Calu3 (cell line): ENCODE measurements at regions of chr6 and their contacts with region 1.

Region 1: DNA sequence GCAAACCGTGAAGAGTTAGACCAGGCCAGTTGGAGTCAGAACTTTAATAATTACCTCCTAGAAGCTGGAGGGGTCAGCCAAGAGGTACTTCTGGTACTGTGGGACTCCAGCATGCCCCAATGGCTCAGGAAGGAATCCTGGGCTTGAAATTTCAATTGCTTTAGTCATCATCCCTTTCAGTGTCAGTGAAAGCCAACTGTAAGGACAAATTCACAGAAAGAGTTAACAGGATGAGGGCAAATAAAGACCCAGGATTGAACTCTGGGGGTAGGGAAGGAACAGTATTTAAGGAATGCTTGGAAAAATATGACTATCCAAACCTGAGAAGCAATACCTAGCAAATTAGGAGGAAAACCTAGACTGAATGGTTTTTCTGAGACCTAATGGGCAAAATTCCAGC is 735.1 kb upstream of the MARCKS start:
- DNase-seq: peak; percentile 44
- H3K4me3 Mint-ChIP-seq: no peak overlapping the region
- H3K27ac Mint-ChIP-seq: peak overlapping the region; percentile 10
- H3K4me1 Mint-ChIP-seq: peaks cover 30% of the 10 kb centered on the region
- H3K27me3 Mint-ChIP-seq: no peaks in the 10 kb centered on the region
- CTCF ChIP-seq: no peak

Region 2: DNA sequence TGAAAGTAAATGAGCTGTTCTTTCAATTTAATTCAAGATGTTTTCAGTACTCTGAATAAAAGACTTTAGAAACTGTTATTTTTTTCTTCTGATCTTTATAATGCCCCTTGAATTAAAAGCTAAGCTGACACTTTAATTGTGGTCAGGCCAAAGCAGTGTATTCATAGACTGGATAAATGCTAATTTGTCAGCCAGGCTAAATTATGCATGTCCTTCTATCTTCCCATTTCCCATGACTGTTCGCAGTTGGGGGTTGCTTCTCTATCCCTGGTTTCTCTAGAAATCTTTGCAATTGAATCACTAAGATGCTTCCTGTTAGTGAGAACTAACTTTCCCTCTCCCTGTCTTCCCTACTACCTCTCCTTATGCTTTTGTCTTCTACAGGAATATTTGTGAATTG is 378.7 kb before region 1 on chr6:
- CTCF ChIA-PET with region 1: no interaction called
- intact Hi-C with region 1: no loop called
- DNase-seq: no peak
- H3K4me3 Mint-ChIP-seq: no peak overlapping the region
- H3K27ac Mint-ChIP-seq: no peak overlapping the region
- H3K4me1 Mint-ChIP-seq: no peaks in the 10 kb centered on the region
- H3K27me3 Mint-ChIP-seq: no peaks in the 10 kb centered on the region
- CTCF ChIP-seq: no peak

Region 3: DNA sequence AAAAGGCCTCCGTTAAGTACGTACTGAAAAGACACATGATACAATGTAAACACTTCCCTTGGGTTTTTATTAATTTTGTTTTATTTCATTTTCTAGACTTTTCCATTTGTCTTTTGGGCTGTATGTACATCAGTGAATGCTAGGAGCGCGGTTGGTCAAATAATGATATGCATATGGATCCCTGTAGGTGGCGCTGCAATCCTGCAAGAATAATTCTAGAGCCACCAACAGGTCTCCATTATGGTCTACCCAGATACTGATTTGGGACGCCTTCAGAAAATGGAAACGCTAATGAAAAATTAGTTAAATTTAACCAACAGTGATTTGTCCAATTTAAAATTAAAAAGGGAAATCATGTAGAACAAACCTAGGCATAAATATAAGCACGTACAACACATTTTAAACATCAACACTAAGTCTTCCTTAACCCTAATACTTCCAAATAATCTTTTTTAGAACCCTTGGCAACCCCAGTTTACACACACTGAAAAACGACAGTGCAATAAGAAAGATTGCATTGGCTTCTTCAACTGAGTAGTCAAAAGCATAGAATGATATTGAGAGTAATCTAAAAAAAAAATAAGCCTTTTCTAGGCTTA is 341.5 kb before region 1 on chr6:
- CTCF ChIA-PET with region 1: no interaction called
- intact Hi-C with region 1: loop called (anchors 10 kb)
- DNase-seq: peak; percentile 76
- H3K4me3 Mint-ChIP-seq: no peak overlapping the region
- H3K27ac Mint-ChIP-seq: no peak overlapping the region
- H3K4me1 Mint-ChIP-seq: no peaks in the 10 kb centered on the region
- H3K27me3 Mint-ChIP-seq: no peaks in the 10 kb centered on the region
- CTCF ChIP-seq: peak; percentile 73

Region 4: GRCh38 chr6:113359155-113360140 is 237.4 kb after region 1 on chr6:
- CTCF ChIA-PET with region 1: no interaction called
- intact Hi-C with region 1: loop called (anchors 5 kb)
- DNase-seq: peak; percentile 40
- H3K4me3 Mint-ChIP-seq: no peak overlapping the region
- H3K27ac Mint-ChIP-seq: peak overlapping the region; percentile 69
- H3K4me1 Mint-ChIP-seq: peaks cover 65% of the 10 kb centered on the region
- H3K27me3 Mint-ChIP-seq: no peaks in the 10 kb centered on the region
- CTCF ChIP-seq: no peak

Region 5: DNA sequence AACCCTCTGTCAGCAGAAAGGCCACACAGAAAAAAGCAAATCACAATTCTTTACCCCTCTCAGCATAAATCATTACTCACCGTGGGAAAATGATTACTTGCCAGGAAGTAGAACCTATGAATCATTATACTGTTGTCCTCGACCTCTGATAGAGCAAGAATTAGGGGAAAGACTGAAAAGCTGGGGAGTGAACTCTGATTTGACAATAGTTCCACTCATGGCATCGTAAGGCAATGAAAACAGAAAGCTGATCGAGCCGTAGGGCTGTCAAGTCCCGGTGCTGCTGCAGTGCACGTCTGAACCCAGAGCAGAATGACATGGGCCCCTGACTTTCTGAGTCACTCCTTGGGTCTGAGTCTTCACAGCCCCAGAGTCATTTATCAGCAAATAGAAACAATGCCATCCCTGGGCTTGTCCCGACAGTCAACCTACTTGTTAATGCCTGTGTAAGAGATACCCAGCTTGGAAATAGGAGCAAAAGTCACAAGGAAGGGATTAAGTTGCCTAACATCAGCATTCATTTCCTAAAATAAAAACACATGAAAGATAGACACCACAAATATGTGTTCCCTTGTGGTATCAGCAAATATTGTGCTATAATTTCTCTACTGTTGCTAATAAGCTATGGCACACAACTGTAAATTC is 510.3 kb after region 1 on chr6:
- CTCF ChIA-PET with region 1: no interaction called
- intact Hi-C with region 1: loop called (anchors 5 kb)
- DNase-seq: peak; percentile 61
- H3K4me3 Mint-ChIP-seq: peak overlapping the region; percentile 55
- H3K27ac Mint-ChIP-seq: peak overlapping the region; percentile 97
- H3K4me1 Mint-ChIP-seq: peaks cover 57% of the 10 kb centered on the region
- H3K27me3 Mint-ChIP-seq: no peaks in the 10 kb centered on the region
- CTCF ChIP-seq: no peak

Region 6: DNA sequence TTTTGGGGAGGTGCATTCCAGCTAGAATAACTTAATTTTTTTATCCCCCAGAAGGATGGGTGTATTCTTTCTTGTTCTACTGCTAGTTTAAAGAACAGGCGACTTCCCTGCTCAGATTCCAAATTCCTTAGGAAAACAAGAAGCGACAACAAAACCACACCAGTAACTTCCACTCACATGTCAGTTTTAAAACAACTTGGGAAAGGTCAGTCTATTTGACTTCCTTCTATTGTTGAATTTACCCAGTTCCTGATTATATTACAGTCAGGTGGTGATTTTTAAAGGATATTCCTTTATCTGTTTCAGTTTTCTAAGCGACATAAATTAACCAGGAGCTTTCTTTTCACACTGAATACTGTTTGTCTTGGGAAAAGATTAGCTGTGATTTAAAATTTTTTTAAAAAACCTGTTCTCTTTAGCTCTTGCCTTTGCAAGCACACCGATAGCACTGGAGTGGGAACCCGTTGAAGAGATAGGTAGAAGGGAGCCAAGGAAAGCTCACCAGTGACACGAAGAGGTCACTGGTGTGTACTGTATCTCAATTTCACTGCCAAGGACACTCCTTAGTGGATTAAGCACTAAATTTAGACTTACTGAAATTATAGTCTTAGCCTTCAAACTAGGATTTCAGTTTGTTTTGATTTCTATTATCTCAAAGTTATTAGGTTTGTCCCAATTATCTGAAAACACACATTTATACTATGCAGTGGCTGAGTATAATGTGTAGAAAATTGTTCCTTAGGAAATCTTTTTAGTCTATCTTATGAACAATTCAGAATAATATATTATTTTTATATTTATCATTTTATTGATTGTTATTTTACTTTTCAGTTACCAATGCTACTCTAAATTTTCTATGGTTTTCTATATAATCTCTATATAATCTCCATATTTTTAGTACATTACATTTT is 757.4 kb after region 1 on chr6:
- CTCF ChIA-PET with region 1: interaction called, 3 read pairs
- intact Hi-C with region 1: loop called (anchors 5 kb)
- DNase-seq: peak; percentile 54
- H3K4me3 Mint-ChIP-seq: no peak overlapping the region
- H3K27ac Mint-ChIP-seq: no peak overlapping the region
- H3K4me1 Mint-ChIP-seq: peaks cover 16% of the 10 kb centered on the region
- H3K27me3 Mint-ChIP-seq: no peaks in the 10 kb centered on the region
- CTCF ChIP-seq: peak; percentile 55